ENCODE measurements at regions of chrX and their contacts with region 1.

Region 1: DNA sequence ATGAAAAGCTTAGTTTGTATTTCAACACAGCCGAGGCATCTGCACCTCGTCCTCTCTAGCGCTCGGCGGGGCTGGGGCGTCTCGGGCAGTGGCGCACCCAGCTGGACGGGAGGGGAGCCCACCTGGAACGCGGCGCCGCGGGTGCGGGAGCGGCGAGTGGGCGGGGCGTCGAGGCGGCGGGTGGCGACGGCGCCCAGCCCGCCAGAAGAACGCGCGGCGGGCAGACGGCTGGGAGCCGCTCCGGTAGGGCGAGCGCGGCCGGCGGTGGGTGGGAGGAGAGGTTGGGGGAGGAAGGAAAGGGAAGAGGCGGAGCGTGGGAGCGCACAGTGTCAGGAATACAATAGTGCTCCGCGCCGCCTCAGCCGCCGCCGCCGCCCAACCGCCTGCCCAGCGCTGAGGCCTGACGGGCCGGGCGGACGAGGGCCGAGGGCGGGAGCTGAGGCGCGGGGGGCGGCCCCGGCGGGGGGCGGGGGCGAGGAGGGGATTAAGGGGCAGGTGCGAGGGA is at the start of gene JADE3:
- DNase-seq: peak; percentile 81
- H3K4me3 Mint-ChIP-seq: peak within 1 kb of the TSS; percentile 77
- H3K27ac Mint-ChIP-seq: peak within 1 kb of the TSS; percentile 44
- H3K4me1 Mint-ChIP-seq: peaks cover 13% of the 10 kb centered on the region
- H3K27me3 Mint-ChIP-seq: no peaks in the 10 kb centered on the region
- CTCF ChIP-seq: no peak
- total RNA-seq, gene JADE3: 14.8 and 17.0 TPM in 2 replicates

Region 2: GRCh38 chrX:46978341-46979291 is 66.5 kb after region 1 on chrX:
- CTCF ChIA-PET with region 1: interaction called, 4 read pairs
- intact Hi-C with region 1: loop called (anchors 5 kb)
- DNase-seq: peak; percentile 79
- H3K4me3 Mint-ChIP-seq: no peak overlapping the region
- H3K27ac Mint-ChIP-seq: peak overlapping the region; percentile 19
- H3K4me1 Mint-ChIP-seq: peaks cover 15% of the 10 kb centered on the region
- H3K27me3 Mint-ChIP-seq: no peaks in the 10 kb centered on the region
- CTCF ChIP-seq: peak; percentile 46

Region 3: DNA sequence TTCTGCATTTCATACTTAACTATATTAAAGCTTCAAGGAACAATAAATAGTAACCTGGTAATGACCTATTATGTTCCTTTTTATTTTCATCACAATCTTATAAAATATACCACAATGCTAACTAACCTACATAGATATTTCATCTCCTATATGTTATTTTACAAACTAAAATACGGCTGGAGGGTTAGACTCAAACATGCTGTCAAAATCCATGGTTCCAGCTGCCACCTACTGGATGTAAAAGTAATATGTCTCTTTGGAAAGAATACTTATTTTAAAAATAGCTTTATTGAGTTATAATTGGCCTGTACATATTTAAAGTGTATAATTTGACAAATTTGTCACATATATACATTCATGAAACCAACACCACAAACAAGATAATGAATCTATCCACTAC is 181.1 kb after region 1 on chrX:
- CTCF ChIA-PET with region 1: no interaction called
- intact Hi-C with region 1: no loop called
- DNase-seq: no peak
- H3K4me3 Mint-ChIP-seq: no peak overlapping the region
- H3K27ac Mint-ChIP-seq: no peak overlapping the region
- H3K4me1 Mint-ChIP-seq: no peaks in the 10 kb centered on the region
- H3K27me3 Mint-ChIP-seq: no peaks in the 10 kb centered on the region
- CTCF ChIP-seq: peak; percentile 12

Measured in Calu3 (cell line).